Activated naive CD4-positive, alpha-beta T cell treated with anti-CD3 and anti-CD28 coated beads for 36 hours (primary cell): ENCODE measurements at regions of chr1 and their contacts with region 1.

Region 1: GRCh38 chr1:235367000-235367908 is at the start of gene TBCE:
- DNase-seq: peak; percentile 92
- H3K4me3 Mint-ChIP-seq: peak within 1 kb of the TSS; percentile 96
- H3K27ac Mint-ChIP-seq: peak within 1 kb of the TSS; percentile 90
- H3K4me1 Mint-ChIP-seq: peaks cover 27% of the 10 kb centered on the region
- H3K27me3 Mint-ChIP-seq: no peaks in the 10 kb centered on the region
- total RNA-seq, gene TBCE: 18.8 to 22.1 TPM

Region 2: GRCh38 chr1:235093696-235094592 is 273.3 kb before region 1 on chr1:
- CTCF ChIA-PET with region 1: no interaction called
- intact Hi-C with region 1: no loop called
- DNase-seq: peak; percentile 92
- H3K4me3 Mint-ChIP-seq: no peak overlapping the region
- H3K27ac Mint-ChIP-seq: no peak overlapping the region
- H3K4me1 Mint-ChIP-seq: peaks cover 7% of the 10 kb centered on the region
- H3K27me3 Mint-ChIP-seq: peaks cover 2% of the 10 kb centered on the region

Region 3: DNA sequence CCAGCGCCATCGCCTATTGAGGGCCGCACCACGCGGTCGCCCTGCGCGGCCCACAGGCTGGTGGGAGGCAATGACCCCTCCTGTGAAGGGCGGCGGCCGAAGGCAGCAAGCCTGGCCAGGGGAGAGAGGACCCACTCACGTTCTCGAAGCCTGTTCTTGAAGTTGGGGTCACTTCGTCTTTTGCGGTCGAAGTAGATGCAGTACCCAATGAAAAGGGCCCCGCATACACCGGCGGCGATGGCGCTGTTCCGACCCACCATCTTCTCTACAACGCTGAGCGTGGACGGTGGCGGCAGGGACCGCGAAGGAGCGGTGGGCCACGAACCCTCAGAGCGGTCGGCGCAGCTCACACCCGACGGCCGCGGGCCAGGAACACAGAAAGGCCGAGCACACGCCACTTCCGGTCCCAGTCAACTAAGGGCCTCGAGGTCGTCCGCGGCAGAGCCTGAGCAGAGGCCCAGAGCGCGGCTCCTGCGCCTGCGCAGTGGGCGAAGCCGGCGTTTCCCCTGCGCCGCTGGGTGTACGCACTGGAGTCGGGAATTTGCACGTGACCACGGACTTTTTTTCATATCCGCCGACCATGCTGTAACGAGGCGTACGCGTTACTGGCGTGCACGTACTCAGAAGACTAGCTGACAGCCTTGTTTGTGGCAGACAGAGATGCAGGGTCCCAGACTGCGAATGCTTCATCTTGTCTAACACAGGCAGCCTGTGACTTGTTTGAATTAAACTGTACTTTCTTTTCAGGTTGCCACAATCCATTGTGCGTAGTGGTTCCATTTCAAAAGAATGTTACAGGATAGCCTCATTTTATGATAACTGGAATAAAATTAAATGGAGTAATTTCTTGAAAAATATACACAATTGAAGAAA is 238.6 kb before region 1 on chr1 and contains the start of gene TOMM20:
- CTCF ChIA-PET with region 1: no interaction called
- intact Hi-C with region 1: loop called (anchors 1 kb)
- DNase-seq: peak; percentile 98
- H3K4me3 Mint-ChIP-seq: peak within 1 kb of the TSS; percentile 96
- H3K27ac Mint-ChIP-seq: peak within 1 kb of the TSS; percentile 94
- H3K4me1 Mint-ChIP-seq: peaks cover 38% of the 10 kb centered on the region
- H3K27me3 Mint-ChIP-seq: no peaks in the 10 kb centered on the region
- total RNA-seq, gene TOMM20: 155 to 192 TPM

Region 4: GRCh38 chr1:235270625-235271024 is 96.6 kb before region 1 on chr1:
- CTCF ChIA-PET with region 1: no interaction called
- intact Hi-C with region 1: loop called (anchors 2 kb)
- DNase-seq: no peak
- H3K4me3 Mint-ChIP-seq: no peak overlapping the region
- H3K27ac Mint-ChIP-seq: peak overlapping the region; percentile 75
- H3K4me1 Mint-ChIP-seq: peaks cover 65% of the 10 kb centered on the region
- H3K27me3 Mint-ChIP-seq: no peaks in the 10 kb centered on the region

Region 5: GRCh38 chr1:235295902-235296376 is 71.3 kb before region 1 on chr1:
- CTCF ChIA-PET with region 1: no interaction called
- intact Hi-C with region 1: loop called (anchors 2 kb)
- DNase-seq: no peak
- H3K4me3 Mint-ChIP-seq: no peak overlapping the region
- H3K27ac Mint-ChIP-seq: no peak overlapping the region
- H3K4me1 Mint-ChIP-seq: peaks cover 59% of the 10 kb centered on the region
- H3K27me3 Mint-ChIP-seq: no peaks in the 10 kb centered on the region

Region 6: GRCh38 chr1:235513495-235514366 is 146.5 kb after region 1 on chr1:
- CTCF ChIA-PET with region 1: no interaction called
- intact Hi-C with region 1: no loop called
- DNase-seq: peak; percentile 54
- H3K4me3 Mint-ChIP-seq: no peak overlapping the region
- H3K27ac Mint-ChIP-seq: no peak overlapping the region
- H3K4me1 Mint-ChIP-seq: no peaks in the 10 kb centered on the region
- H3K27me3 Mint-ChIP-seq: no peaks in the 10 kb centered on the region

Region 7: GRCh38 chr1:235567812-235568503 is 200.7 kb after region 1 on chr1:
- CTCF ChIA-PET with region 1: no interaction called
- intact Hi-C with region 1: no loop called
- DNase-seq: peak; percentile 13
- H3K4me3 Mint-ChIP-seq: no peak overlapping the region
- H3K27ac Mint-ChIP-seq: no peak overlapping the region
- H3K4me1 Mint-ChIP-seq: peaks cover 10% of the 10 kb centered on the region
- H3K27me3 Mint-ChIP-seq: no peaks in the 10 kb centered on the region